Activated B cell treated with CpG ODN at 0.5 μM for 24 hours (primary cell): ENCODE measurements at regions of chr11 and their contacts with region 1.

Region 1: DNA sequence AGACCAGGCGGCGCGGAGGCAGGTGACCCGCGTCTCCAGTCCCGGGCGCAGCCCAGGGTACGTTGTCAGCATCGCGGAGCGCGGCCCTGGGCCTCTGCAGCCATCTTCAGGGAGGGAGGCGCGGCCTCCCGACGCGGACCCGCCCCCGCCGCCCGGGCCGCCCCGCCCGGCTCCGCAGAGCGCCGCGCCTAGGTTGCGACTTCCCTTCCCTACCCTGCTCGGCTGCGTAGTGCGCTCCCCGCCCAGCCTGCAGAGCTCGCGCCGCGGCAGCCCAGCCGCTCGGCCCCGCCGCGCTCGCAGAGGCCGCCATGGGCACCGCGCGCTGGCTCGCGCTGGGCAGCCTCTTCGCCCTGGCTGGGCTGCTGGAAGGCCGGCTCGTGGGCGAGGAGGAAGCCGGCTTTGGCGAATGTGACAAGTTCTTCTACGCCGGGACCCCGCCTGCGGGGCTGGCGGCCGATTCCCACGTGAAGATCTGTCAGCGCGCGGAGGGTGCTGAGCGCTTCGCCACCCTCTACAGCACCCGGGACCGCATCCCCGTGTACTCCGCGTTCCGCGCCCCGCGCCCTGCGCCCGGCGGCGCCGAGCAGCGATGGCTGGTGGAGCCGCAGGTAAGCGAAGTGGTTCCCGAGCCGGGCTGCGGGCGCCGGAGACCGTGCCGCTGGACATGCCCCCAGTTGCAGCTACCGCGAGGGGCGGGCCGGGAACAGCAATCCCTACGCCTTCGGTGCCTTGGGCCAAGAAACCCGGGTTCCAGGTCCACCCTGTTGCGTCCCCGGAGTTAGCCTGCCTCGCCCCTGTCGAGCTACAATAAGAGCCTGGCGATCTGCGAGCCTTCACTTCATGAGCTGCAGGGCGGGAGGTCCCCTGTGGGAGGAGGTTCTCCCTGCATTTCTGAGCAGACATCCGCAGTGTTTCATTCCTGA is at the start of gene ENDOD1:
- DNase-seq: peak; percentile 88
- ATAC-seq: peak; percentile 93
- H3K4me3 Mint-ChIP-seq: peak within 1 kb of the TSS; percentile 92
- H3K27ac Mint-ChIP-seq: peak within 1 kb of the TSS; percentile 94
- H3K4me1 Mint-ChIP-seq: peaks cover 56% of the 10 kb centered on the region
- H3K27me3 Mint-ChIP-seq: no peaks in the 10 kb centered on the region
- CTCF ChIP-seq: no peak
- total RNA-seq, gene ENDOD1: 9.5 and 9.8 TPM in 2 replicates

Region 2: GRCh38 chr11:95076416-95076815 is 13.5 kb before region 1 on chr11:
- CTCF ChIA-PET with region 1: interaction called, 138 read pairs
- POLR2A ChIA-PET with region 1: interaction called, 10 read pairs
- intact Hi-C with region 1: no loop called
- DNase-seq: no peak
- ATAC-seq: no peak
- H3K4me3 Mint-ChIP-seq: no peak overlapping the region
- H3K27ac Mint-ChIP-seq: no peak overlapping the region
- H3K4me1 Mint-ChIP-seq: peaks cover 8% of the 10 kb centered on the region
- H3K27me3 Mint-ChIP-seq: no peaks in the 10 kb centered on the region
- CTCF ChIP-seq: no peak

Region 3: GRCh38 chr11:95108159-95108611 is 18.3 kb after region 1 on chr11:
- CTCF ChIA-PET with region 1: interaction called, 5 read pairs
- POLR2A ChIA-PET with region 1: interaction called, 41 read pairs
- intact Hi-C with region 1: loop called (anchors 2 kb)
- DNase-seq: no peak
- ATAC-seq: peak; percentile 45
- H3K4me3 Mint-ChIP-seq: peak overlapping the region; percentile 79
- H3K27ac Mint-ChIP-seq: peak overlapping the region; percentile 93
- H3K4me1 Mint-ChIP-seq: peaks cover 58% of the 10 kb centered on the region
- H3K27me3 Mint-ChIP-seq: no peaks in the 10 kb centered on the region
- CTCF ChIP-seq: no peak

Region 4: DNA sequence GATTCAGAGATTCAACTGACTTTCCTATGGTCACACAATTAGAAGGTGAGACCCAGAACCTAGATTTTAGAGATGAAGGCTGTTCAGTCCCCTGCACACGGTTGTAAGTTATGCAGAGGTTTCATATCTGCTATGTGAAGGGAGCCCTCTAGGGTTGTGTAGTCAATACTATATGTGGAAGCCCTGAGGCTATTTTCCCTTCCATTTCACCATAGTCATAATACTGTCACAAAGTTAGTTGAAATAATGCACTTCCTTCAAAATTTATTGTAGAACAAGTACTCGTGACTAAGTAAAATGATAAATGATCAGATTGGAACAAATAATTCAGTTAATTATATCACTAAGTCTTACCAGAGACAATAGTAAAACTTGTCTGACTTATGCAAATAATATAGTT is 48.6 kb after region 1 on chr11:
- CTCF ChIA-PET with region 1: interaction called, 7 read pairs
- POLR2A ChIA-PET with region 1: interaction called, 5 read pairs
- intact Hi-C with region 1: loop called (anchors 1 kb)
- DNase-seq: no peak
- ATAC-seq: peak; percentile 84
- H3K4me3 Mint-ChIP-seq: no peak overlapping the region
- H3K27ac Mint-ChIP-seq: no peak overlapping the region
- H3K4me1 Mint-ChIP-seq: peaks cover 10% of the 10 kb centered on the region
- H3K27me3 Mint-ChIP-seq: no peaks in the 10 kb centered on the region
- CTCF ChIP-seq: no peak